ENCODE measurements at regions of chr17 and their contacts with region 1.

Region 1: DNA sequence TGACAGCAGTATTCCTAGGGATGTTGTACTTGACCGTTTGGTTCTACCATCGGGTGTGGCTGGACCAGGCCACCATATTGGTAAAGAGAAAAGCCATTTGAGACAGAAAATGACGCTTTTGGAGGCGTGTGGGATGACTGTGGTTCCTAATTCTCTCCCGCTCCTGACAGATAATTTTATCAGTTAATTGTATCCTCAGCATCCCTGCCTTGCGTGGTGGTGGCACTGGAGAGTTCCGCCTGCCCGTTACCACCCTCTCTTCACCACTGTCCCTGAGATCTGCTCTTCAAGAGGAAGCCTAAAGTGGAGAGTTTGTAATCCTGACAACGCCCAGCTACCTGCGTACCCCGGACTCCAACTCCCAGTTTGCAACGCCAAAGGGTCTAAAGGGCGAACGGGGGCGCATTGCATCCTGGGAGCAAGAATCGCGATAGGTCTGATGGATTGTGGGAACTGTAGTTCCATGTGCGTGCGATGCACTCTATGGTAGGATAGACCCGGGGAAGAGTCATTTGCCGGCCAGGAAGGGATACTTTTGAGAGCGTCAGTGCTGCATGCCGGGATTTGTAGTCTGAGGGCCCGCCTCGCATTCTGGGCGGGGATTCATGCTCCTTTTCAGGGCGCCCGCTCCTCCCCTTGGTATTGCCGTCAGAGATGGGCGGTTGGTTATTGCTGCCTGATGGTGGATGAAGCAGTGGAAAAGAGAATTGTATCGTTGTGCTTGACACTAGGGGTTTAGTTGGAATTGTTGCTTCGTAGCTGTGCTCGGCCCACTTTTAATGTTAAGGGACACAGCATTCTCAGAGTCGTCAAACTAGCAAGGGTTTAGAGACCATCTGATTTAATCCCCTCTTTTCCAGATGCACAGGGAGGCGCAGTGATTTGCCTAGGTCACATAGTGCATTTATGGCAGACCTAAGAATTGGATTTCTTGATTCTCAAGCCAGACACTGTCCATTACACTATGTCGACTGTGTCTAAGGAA is 965 bp upstream of the PHF12 start:
- DNase-seq: peak; percentile 82

Region 2: GRCh38 chr17:28885363-28885762 is 66.9 kb before region 1 on chr17:
- CTCF ChIA-PET with region 1: no interaction called
- POLR2A ChIA-PET with region 1: no interaction called
- DNase-seq: no peak

Region 3: GRCh38 chr17:28896884-28897768 is 55.2 kb before region 1 on chr17 and contains the start of gene FLOT2:
- CTCF ChIA-PET with region 1: interaction called, 5 read pairs
- POLR2A ChIA-PET with region 1: interaction called, 15 read pairs
- DNase-seq: peak; percentile 55

Region 4: GRCh38 chr17:28937044-28937729 is 15.1 kb before region 1 on chr17:
- CTCF ChIA-PET with region 1: interaction called, 5 read pairs
- POLR2A ChIA-PET with region 1: interaction called, 19 read pairs
- DNase-seq: no peak

Region 5: DNA sequence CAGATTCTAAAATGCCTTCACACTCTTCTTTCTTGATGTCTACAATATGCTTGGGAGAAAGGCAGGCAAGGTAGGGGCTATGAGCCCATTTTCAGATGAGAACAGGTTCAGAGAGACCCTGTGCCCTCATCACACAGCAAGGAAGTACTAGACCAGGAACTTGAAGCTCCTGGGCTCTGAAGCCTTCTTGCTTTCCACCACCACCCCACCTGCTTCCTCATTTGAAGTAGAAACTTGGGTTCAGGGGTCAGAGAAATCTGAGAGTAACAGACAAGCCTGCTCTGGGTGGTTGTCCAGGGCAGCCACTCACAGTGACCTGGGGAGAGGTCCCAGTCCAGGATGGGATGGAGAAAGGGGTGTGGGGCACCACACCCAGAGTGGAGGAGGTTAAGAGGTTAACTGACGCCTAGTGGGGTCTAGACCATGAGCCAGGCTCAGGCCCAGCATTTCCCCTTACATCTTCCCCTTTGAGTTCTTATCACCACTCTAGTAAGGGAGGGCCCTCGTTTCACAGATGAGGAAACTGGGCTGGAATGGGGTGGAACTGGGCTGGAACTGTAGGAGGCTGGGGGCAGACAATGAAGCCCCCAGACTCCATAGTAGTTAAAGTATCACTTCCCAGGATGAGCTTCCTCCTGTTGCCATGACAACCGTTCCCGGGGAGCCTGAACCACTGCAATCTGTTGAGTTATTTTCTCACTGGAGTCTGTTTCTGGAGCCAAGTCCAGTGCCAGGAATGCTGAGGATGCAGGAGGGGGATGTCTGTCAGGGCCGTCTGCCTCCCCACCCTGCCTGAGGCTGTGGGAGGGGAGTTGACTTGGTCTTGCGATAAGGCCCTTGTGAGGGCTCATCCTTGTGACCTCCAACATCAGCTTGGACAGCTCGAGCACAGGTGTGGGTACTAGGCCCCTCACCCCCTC is 15.2 kb after region 1 on chr17:
- CTCF ChIA-PET with region 1: interaction called, 50 read pairs
- POLR2A ChIA-PET with region 1: interaction called, 6 read pairs
- DNase-seq: no peak

Region 6: DNA sequence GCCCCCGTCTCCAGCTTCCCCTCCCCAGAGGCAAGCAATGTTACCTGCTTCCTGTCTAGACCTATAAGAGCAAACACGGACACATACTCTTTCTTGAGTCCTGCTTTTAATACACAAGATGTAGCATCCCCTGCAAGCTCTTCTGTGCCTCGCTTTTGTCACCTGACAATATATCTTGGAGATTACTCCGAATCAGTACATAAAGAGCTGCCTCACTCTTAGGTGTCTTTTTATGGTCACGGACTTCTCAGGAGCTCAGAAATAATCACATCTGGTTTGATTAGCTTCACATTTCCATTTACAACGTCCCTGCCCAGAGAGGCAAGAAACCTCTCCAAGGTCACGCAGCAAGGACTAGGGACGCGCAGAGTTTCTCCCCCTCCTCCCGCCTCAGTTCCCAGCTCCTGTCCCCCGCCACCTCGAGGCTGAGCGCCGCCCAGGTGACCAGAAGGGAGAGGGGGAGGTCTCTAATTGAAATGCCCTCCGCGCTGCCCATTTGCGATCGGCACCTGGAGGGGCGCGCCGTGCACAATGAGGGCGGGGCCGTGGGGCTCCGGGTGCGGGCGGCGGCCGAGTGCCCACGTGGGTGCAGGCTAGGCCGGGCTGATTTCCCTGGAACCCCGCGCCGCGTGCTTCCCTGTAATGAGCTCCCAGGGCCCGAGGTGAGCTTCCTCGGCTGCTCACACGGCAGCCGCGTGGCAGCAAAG is 67.3 kb after region 1 on chr17:
- CTCF ChIA-PET with region 1: no interaction called
- POLR2A ChIA-PET with region 1: no interaction called
- DNase-seq: no peak

Region 7: DNA sequence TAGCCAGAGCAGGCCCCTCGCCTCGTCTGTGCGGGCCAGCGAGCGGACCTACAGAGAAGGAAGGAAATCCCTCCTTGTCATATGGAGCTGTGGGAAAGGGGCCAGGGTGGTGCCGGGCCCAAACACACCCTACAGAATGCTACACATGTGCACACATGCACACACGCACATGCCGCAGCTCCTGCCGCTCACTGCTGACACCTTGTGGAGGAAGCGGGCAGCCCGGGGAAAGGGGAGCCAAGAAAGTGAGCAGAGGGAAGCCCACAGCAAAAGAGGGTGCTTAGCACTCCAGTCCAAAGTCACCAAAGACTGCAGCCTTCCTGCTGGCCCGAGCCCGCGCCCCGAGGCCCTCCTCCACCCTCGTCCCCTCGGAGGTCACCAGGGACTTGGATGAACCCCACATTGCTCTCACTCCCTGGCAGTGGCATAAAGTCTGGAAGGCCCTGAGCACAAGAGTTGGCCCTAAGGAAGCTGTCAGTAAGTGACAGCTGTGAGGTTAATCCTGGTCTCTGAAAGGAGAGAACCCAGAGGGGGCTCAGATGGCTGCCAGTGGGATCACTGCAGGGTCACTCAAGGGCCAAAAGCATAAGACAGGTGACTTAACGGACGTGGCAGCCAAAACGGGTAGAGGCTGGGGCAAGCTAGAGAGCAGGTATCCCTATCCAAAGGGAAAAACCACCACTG is 159.7 kb after region 1 on chr17:
- CTCF ChIA-PET with region 1: interaction called, 24 read pairs
- POLR2A ChIA-PET with region 1: interaction called, 8 read pairs
- DNase-seq: peak; percentile 58

Region 8: DNA sequence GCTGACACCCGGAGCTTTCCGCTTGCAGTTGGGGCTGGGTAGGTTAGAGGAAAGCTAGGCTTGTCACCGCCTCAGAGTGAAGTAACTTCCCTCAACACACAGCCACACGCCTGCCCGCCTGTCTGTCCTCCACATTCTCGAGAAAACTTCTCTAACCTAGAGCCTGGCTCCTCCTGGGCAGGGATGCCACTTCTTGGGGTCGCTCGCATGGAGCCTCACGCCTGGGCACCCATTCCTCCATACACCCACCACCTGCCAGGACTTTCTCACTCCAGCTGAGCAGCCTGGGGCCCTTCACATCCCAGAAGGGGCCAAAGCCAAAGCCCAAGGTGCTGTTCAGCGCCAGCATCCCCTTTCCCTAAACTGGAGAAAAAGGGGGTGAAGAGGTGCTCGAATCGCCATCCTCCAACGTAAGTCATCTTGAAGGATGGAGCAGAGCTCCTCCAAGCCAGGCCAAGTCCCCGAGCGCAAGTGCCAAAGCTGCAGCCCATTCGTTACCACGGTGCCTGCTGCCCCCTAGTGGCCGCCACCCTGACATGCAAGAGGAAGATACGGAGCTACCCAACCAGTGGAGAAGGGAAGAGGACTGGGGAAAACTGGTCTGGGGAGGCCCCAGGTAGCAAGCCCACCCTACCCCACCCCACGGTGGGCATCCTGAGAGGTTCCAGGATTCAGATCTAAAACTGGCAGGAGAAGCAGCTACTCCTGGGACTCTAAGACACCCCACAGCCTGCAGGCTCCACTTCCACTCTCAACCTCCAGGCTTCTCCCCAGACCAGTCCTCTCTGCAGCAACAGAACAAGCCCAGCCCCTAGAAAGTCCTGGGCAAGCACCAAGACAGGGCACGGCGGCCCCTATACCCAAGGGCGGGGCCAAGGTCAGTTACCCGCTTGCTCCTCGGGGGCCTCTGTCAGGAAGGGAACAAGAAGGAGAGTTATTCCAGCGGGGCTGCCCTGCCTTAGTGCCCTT is 164.8 kb after region 1 on chr17:
- CTCF ChIA-PET with region 1: interaction called, 24 read pairs
- POLR2A ChIA-PET with region 1: interaction called, 8 read pairs
- DNase-seq: peak; percentile 74